MCF 10A (cell line): ENCODE measurements at regions of chr15 and their contacts with region 1.

Region 1: GRCh38 chr15:99324082-99324620 is 72.9 kb downstream of the LRRC28 start:
- DNase-seq: peak; percentile 84
- H3K4me3 Mint-ChIP-seq: peak overlapping the region; percentile 78
- H3K27ac Mint-ChIP-seq: peak overlapping the region; percentile 96
- H3K4me1 Mint-ChIP-seq: peaks cover 59% of the 10 kb centered on the region
- H3K27me3 Mint-ChIP-seq: no peaks in the 10 kb centered on the region
- CTCF ChIP-seq: no peak

Region 2: GRCh38 chr15:98856218-98856907 is 467.8 kb before region 1 on chr15:
- CTCF ChIA-PET with region 1: no interaction called
- POLR2A ChIA-PET with region 1: no interaction called
- intact Hi-C with region 1: no loop called
- DNase-seq: no peak
- H3K4me3 Mint-ChIP-seq: no peak overlapping the region
- H3K27ac Mint-ChIP-seq: no peak overlapping the region
- H3K4me1 Mint-ChIP-seq: peaks cover 28% of the 10 kb centered on the region
- H3K27me3 Mint-ChIP-seq: no peaks in the 10 kb centered on the region
- CTCF ChIP-seq: no peak

Region 3: GRCh38 chr15:99123706-99124451 is 200.3 kb before region 1 on chr15:
- CTCF ChIA-PET with region 1: no interaction called
- POLR2A ChIA-PET with region 1: no interaction called
- intact Hi-C with region 1: no loop called
- DNase-seq: peak; percentile 95
- H3K4me3 Mint-ChIP-seq: peak overlapping the region; percentile 68
- H3K27ac Mint-ChIP-seq: peak overlapping the region; percentile 70
- H3K4me1 Mint-ChIP-seq: peaks cover 19% of the 10 kb centered on the region
- H3K27me3 Mint-ChIP-seq: no peaks in the 10 kb centered on the region
- CTCF ChIP-seq: no peak

Region 4: GRCh38 chr15:99305761-99306505 is 18.2 kb before region 1 on chr15:
- CTCF ChIA-PET with region 1: no interaction called
- POLR2A ChIA-PET with region 1: interaction called, 24 read pairs
- intact Hi-C with region 1: no loop called
- DNase-seq: peak; percentile 91
- H3K4me3 Mint-ChIP-seq: no peak overlapping the region
- H3K27ac Mint-ChIP-seq: peak overlapping the region; percentile 58
- H3K4me1 Mint-ChIP-seq: peaks cover 16% of the 10 kb centered on the region
- H3K27me3 Mint-ChIP-seq: no peaks in the 10 kb centered on the region
- CTCF ChIP-seq: no peak

Region 5: GRCh38 chr15:99433034-99433756 is 109.0 kb after region 1 on chr15:
- CTCF ChIA-PET with region 1: no interaction called
- POLR2A ChIA-PET with region 1: no interaction called
- intact Hi-C with region 1: no loop called
- DNase-seq: peak; percentile 76
- H3K4me3 Mint-ChIP-seq: no peak overlapping the region
- H3K27ac Mint-ChIP-seq: peak overlapping the region; percentile 57
- H3K4me1 Mint-ChIP-seq: peaks cover 23% of the 10 kb centered on the region
- H3K27me3 Mint-ChIP-seq: no peaks in the 10 kb centered on the region
- CTCF ChIP-seq: no peak

Region 6: DNA sequence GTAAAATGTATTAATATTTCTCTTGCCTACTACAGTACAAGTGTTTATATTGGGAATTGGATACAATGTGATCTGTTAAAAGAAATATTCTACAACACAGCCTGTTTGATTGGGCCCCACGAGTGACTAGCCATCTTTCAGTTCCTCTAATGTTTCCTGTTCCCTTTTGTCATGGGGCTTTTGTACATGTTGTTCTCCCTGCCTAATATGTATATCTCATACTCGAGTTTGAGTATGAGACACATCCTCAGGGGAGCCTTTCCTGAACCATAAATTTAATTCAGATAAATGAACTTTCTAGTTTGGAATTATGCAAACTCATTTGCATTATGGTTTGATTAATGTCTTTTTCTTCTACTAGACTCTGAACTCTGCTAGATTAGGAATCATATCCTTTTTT is 307.1 kb after region 1 on chr15:
- CTCF ChIA-PET with region 1: no interaction called
- POLR2A ChIA-PET with region 1: no interaction called
- intact Hi-C with region 1: no loop called
- DNase-seq: no peak
- H3K4me3 Mint-ChIP-seq: no peak overlapping the region
- H3K27ac Mint-ChIP-seq: no peak overlapping the region
- H3K4me1 Mint-ChIP-seq: peaks cover 30% of the 10 kb centered on the region
- H3K27me3 Mint-ChIP-seq: no peaks in the 10 kb centered on the region
- CTCF ChIP-seq: no peak